GM12878 (cell line): ENCODE measurements at regions of chr12 and their contacts with region 1.

Region 1: GRCh38 chr12:110280779-110281548 is at the start of gene ATP2A2:
- DNase-seq: peak; percentile 30
- ATAC-seq: peak; percentile 80
- H3K4me3 ChIP-seq: peak within 1 kb of the TSS; percentile 84
- H3K27ac ChIP-seq: peak within 1 kb of the TSS; percentile 93
- H3K4me1 ChIP-seq: no peaks in the 10 kb centered on the region; the same call in 1 of the 2 replicates
- H3K27me3 ChIP-seq: no peaks in the 10 kb centered on the region
- CTCF ChIP-seq: no peak
- EP300 ChIP-seq: no peak
- POLR2A ChIP-seq: peak; percentile 94
- RAD21 ChIP-seq: no peak
- polyA plus RNA-seq, gene ATP2A2: 3.7 to 5.1 TPM

Region 2: DNA sequence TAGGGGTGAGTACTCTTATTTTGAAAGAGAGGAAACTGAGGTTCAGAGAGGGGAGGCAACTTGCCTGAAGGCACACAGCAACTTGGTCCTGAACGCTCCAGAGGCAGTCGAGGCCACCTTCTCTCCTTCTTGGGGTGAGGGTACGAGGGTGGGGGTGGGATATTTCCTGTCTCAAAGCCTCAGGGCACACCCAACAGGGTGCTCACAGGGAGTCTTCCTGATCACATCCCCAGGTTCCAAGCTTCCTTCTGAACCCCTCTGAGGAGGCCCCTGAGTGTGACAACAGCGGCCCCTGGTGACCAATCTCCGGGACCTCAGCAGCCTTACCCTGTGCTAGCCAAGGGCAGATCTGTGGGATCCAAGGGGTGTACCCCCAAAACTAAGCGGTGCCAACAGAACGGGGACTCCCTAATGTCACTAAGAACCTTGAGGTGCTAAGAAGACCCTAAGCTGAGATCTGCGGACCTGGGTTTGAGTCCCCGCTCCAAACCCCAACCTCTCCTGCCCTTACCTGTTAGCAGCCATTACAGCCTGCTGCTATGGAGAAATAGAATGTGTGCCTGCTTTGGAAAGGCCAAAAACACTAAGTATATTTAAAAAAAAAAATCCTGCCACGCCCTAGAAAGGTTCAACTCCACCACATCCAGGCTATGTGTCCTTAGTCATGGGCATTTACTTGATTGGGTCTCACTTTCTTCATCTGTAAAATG is 505.6 kb before region 1 on chr12:
- CTCF ChIA-PET with region 1: no interaction called
- POLR2A ChIA-PET with region 1: no interaction called
- RAD21 ChIA-PET with region 1: no interaction called
- SMC1A ChIA-PET with region 1: no interaction called
- in situ Hi-C with region 1: no loop called
- intact Hi-C with region 1: no loop called
- DNase-seq: no peak
- ATAC-seq: peak; percentile 87
- H3K4me3 ChIP-seq: no peak overlapping the region
- H3K27ac ChIP-seq: no peak overlapping the region
- H3K4me1 ChIP-seq: no peaks in the 10 kb centered on the region
- H3K27me3 ChIP-seq: no peaks in the 10 kb centered on the region
- CTCF ChIP-seq: peak; percentile 88 to 94 (median 89)
- EP300 ChIP-seq: no peak
- POLR2A ChIP-seq: no peak
- RAD21 ChIP-seq: peak; percentile 89

Region 3: GRCh38 chr12:110004598-110004997 is 276.4 kb before region 1 on chr12:
- CTCF ChIA-PET with region 1: no interaction called
- POLR2A ChIA-PET with region 1: no interaction called
- RAD21 ChIA-PET with region 1: no interaction called
- SMC1A ChIA-PET with region 1: no interaction called
- in situ Hi-C with region 1: no loop called
- intact Hi-C with region 1: loop called (anchors 2 kb)
- DNase-seq: peak; percentile 60
- ATAC-seq: peak; percentile 79
- H3K4me3 ChIP-seq: peak overlapping the region; percentile 65
- H3K27ac ChIP-seq: peak overlapping the region; percentile 72
- H3K4me1 ChIP-seq: peaks cover 40% of the 10 kb centered on the region
- H3K27me3 ChIP-seq: no peaks in the 10 kb centered on the region
- CTCF ChIP-seq: no peak
- EP300 ChIP-seq: peak in 1 of 2 experiments; percentile 59; a peak in 1 of 4 replicates
- POLR2A ChIP-seq: no peak
- RAD21 ChIP-seq: no peak

Region 4: GRCh38 chr12:110176745-110177144 is 104.2 kb before region 1 on chr12:
- CTCF ChIA-PET with region 1: no interaction called
- POLR2A ChIA-PET with region 1: no interaction called
- RAD21 ChIA-PET with region 1: no interaction called
- SMC1A ChIA-PET with region 1: no interaction called
- in situ Hi-C with region 1: no loop called
- intact Hi-C with region 1: no loop called
- DNase-seq: no peak
- ATAC-seq: no peak
- H3K4me3 ChIP-seq: no peak overlapping the region
- H3K27ac ChIP-seq: no peak overlapping the region
- H3K4me1 ChIP-seq: no peaks in the 10 kb centered on the region
- H3K27me3 ChIP-seq: no peaks in the 10 kb centered on the region
- CTCF ChIP-seq: no peak
- EP300 ChIP-seq: no peak
- POLR2A ChIP-seq: no peak
- RAD21 ChIP-seq: no peak

Region 5: GRCh38 chr12:110320550-110320949 is 39.6 kb after region 1 on chr12:
- CTCF ChIA-PET with region 1: interaction called, 5 read pairs
- POLR2A ChIA-PET with region 1: interaction called, 3 read pairs
- RAD21 ChIA-PET with region 1: interaction called, 4 read pairs
- SMC1A ChIA-PET with region 1: interaction called, 12 read pairs
- in situ Hi-C with region 1: no loop called
- intact Hi-C with region 1: no loop called
- DNase-seq: no peak
- ATAC-seq: no peak
- H3K4me3 ChIP-seq: no peak overlapping the region
- H3K27ac ChIP-seq: no peak overlapping the region
- H3K4me1 ChIP-seq: no peaks in the 10 kb centered on the region
- H3K27me3 ChIP-seq: no peaks in the 10 kb centered on the region
- CTCF ChIP-seq: no peak
- EP300 ChIP-seq: no peak
- POLR2A ChIP-seq: no peak
- RAD21 ChIP-seq: no peak